ENCODE measurements at regions of chr3 and their contacts with region 1.

Region 1: DNA sequence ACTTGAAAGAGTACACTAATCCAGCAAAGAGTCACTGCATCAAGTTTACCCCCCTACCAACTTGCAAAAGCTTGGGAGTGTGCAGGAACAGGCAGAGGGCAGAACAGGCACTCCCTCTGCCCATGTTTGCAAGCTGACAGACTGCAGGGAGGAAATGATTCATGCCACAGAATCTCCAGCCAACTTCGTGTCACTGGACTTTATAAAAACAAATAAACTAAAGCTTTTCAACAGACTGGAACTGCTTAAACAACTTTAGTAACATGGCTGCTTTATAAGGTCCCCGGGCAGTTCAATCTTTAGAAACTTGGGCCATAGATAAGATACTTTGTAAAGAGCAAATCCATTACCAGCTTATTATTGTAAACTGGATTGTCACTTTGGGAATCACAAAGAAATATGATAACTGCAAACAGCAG is 129.4 kb downstream of the THRB start:
- DNase-seq: peak; percentile 54
- ATAC-seq: peak; percentile 90 to 97

Region 2: GRCh38 chr3:23913873-23914743 is 451.1 kb before region 1 on chr3:
- intact Hi-C with region 1: no loop called
- DNase-seq: no peak
- ATAC-seq: no peak

Region 3: GRCh38 chr3:24494618-24495325 is 129.6 kb after region 1 on chr3 and contains the start of gene THRB:
- intact Hi-C with region 1: loop called in 1 of 2 experiments (anchors 10 kb)
- DNase-seq: peak; percentile 82
- ATAC-seq: peak; percentile 78 to 82
- total RNA-seq, gene THRB: 8.3 to 15.4 TPM

Region 4: GRCh38 chr3:24562895-24563294 is 197.7 kb after region 1 on chr3:
- intact Hi-C with region 1: no loop called
- DNase-seq: no peak
- ATAC-seq: no peak